ENCODE measurements at regions of chr15 and their contacts with region 1.

Region 1: GRCh38 chr15:94163999-94164807 is 67.2 kb upstream of the MCTP2 start:
- DNase-seq: no peak
- H3K4me3 ChIP-seq: no peak overlapping the region
- H3K27ac ChIP-seq: no peak overlapping the region
- H3K4me1 ChIP-seq: no peaks in the 10 kb centered on the region
- H3K27me3 ChIP-seq: no peaks in the 10 kb centered on the region
- CTCF ChIP-seq: peak; percentile 70 to 77 (median 75)
- EP300 ChIP-seq: no peak
- POLR2A ChIP-seq: no peak

Region 2: DNA sequence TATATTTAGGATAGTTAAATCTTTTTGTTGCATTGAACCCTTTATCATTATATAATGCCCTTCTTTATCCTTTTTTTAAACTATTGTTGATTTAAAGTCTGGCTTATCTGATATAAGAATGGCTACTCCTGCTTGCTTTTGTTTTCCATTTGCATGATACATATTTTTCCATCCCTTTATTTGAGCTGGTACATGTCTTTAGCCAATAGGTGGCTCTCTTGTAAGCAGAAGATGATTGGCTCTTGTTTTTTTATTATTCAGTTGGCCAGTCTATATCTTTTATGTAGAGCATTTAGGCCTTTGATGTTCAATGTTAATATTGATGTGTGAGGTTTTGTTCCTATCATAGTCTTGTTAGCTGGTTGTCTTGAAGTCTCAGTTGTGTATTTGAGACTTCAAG is 32.3 kb before region 1 on chr15:
- intact Hi-C with region 1: no loop called
- DNase-seq: no peak
- H3K4me3 ChIP-seq: no peak overlapping the region
- H3K27ac ChIP-seq: no peak overlapping the region
- H3K4me1 ChIP-seq: no peaks in the 10 kb centered on the region
- H3K27me3 ChIP-seq: no peaks in the 10 kb centered on the region
- CTCF ChIP-seq: no peak
- EP300 ChIP-seq: no peak
- POLR2A ChIP-seq: no peak

Region 3: DNA sequence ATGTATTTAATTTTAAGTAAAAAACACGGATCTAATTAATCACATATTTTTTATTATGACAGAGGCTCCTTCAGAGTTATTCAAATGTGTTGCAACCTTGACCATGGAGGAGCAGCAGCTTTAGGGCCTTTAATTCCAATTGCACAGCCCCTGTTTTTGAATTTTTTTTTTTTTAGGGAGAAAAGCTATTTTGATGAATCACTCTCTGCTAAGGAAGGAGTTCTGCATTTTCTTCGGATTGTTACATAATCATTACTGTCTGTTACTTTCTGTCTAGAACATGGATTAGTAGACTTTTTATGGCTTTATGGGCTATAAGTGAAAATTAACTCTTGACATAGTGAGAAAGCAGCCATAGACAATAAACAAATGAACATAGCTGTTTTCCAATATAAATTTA is 157.9 kb after region 1 on chr15:
- intact Hi-C with region 1: loop called (anchors 1 kb)
- DNase-seq: no peak
- H3K4me3 ChIP-seq: no peak overlapping the region
- H3K27ac ChIP-seq: no peak overlapping the region
- H3K4me1 ChIP-seq: peaks cover 0 to 8% (median 6%) of the 10 kb centered on the region in 4 donors
- H3K27me3 ChIP-seq: no peaks in the 10 kb centered on the region
- CTCF ChIP-seq: no peak
- EP300 ChIP-seq: no peak
- POLR2A ChIP-seq: no peak

Region 4: DNA sequence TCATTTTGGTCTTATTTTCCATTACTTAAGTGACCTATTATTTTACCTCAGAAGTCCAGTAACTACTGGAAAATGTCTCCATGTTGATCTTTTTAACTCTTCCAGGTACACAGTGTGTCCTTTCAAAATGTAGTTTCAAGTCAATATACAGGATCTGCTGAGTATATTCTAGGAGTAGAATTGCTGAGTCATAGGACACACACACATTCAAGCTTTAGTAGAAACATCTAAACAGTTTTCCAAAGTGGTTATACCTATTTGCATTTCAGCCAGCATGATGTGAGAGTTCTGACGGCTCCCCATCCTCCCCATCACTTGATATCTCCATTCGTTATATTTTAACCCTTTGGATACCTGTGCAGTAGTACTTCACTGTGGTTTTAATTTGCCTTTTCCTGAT is 339.1 kb after region 1 on chr15:
- intact Hi-C with region 1: no loop called
- DNase-seq: no peak
- H3K4me3 ChIP-seq: no peak overlapping the region
- H3K27ac ChIP-seq: no peak overlapping the region
- H3K4me1 ChIP-seq: no peaks in the 10 kb centered on the region
- H3K27me3 ChIP-seq: no peaks in the 10 kb centered on the region
- CTCF ChIP-seq: no peak
- EP300 ChIP-seq: no peak
- POLR2A ChIP-seq: no peak